ENCODE measurements at regions of chr5 and their contacts with region 1.

Region 1: GRCh38 chr5:76269932-76270610 is 133.0 kb upstream of the IQGAP2 start:
- DNase-seq: peak; percentile 44
- CTCF ChIP-seq: no peak

Region 2: GRCh38 chr5:76046741-76047140 is 223.3 kb before region 1 on chr5:
- CTCF ChIA-PET with region 1: no interaction called
- POLR2A ChIA-PET with region 1: no interaction called
- DNase-seq: no peak
- CTCF ChIP-seq: no peak

Region 3: DNA sequence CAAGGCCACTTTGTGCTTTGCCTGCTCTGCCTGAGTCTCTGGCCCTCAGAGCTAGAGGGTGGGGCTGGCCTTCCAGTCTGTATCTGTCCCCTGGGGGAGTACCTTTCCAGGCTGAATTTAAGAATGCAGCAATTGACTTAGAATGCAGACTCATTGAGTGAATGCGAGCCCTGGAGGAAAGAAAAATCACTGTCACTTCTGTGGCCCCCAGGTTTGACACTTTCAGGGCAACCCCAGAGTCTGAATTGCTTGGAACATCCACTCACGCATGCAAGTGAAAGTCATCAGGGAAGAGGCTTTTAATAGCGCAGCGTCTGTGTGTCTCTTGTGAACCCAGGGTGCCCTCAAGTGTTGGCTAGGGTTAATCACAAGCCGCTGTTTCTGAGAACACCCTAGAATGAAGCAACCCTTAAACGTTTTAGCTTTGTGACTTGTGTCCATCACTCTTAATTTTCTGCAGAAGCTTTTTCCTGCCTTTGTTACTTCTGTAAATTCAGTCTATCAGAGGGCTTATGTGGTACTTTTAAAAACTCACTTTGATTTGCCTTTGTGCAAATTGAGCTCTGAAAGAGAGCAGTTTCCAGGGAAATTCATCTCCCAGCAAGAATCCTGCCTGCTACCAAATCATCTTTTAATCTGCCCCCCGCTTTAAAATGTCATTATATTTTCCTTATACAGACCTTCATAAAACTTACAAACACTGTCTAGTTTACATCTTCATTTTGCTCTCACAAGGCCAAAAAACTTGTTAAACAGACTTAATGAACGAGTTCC is 13.8 kb before region 1 on chr5:
- CTCF ChIA-PET with region 1: interaction called, 10 read pairs
- POLR2A ChIA-PET with region 1: no interaction called
- DNase-seq: peak; percentile 62
- CTCF ChIP-seq: peak; percentile 69

Region 4: GRCh38 chr5:76547242-76547890 is 277.3 kb after region 1 on chr5:
- CTCF ChIA-PET with region 1: no interaction called
- POLR2A ChIA-PET with region 1: no interaction called
- DNase-seq: peak; percentile 52
- CTCF ChIP-seq: no peak

Region 5: GRCh38 chr5:76617675-76618074 is 347.6 kb after region 1 on chr5:
- CTCF ChIA-PET with region 1: no interaction called
- POLR2A ChIA-PET with region 1: no interaction called
- DNase-seq: no peak
- CTCF ChIP-seq: no peak